Calu3 (cell line): ENCODE measurements at regions of chr6 and their contacts with region 1.

Region 1: GRCh38 chr6:149082286-149082707 is 235.2 kb upstream of the TAB2 start:
- DNase-seq: peak; percentile 71
- H3K4me3 Mint-ChIP-seq: no peak overlapping the region
- H3K27ac Mint-ChIP-seq: no peak overlapping the region
- H3K4me1 Mint-ChIP-seq: no peaks in the 10 kb centered on the region
- H3K27me3 Mint-ChIP-seq: no peaks in the 10 kb centered on the region
- CTCF ChIP-seq: peak; percentile 64

Region 2: GRCh38 chr6:148557796-148558321 is 524.4 kb before region 1 on chr6:
- CTCF ChIA-PET with region 1: no interaction called
- intact Hi-C with region 1: no loop called
- DNase-seq: no peak
- H3K4me3 Mint-ChIP-seq: no peak overlapping the region
- H3K27ac Mint-ChIP-seq: no peak overlapping the region
- H3K4me1 Mint-ChIP-seq: no peaks in the 10 kb centered on the region
- H3K27me3 Mint-ChIP-seq: no peaks in the 10 kb centered on the region
- CTCF ChIP-seq: no peak

Region 3: DNA sequence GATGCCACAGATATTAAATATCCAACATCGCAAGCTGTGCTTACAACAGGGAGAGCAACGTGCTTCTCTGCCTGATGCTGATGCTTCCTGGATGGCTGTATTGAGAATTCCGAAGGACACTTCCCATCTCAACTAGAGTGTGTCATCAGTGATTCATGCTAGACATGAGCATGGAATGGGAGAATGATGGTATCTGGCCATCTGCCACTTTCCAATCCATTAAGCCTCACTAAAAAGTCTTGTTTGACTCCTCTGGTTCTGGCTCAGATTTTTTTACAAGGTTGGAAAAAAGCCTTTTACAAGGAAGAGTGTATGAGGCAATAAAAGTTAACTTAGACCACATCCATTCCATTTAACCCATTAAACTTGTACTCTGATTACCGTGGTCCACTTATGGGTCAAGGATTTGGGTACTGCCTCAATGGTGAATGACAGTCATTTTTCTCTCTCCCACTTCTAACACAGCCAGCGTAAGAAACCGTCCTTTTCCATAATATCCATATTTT is 70.2 kb before region 1 on chr6:
- CTCF ChIA-PET with region 1: no interaction called
- intact Hi-C with region 1: no loop called
- DNase-seq: no peak
- H3K4me3 Mint-ChIP-seq: no peak overlapping the region
- H3K27ac Mint-ChIP-seq: no peak overlapping the region
- H3K4me1 Mint-ChIP-seq: no peaks in the 10 kb centered on the region
- H3K27me3 Mint-ChIP-seq: no peaks in the 10 kb centered on the region
- CTCF ChIP-seq: no peak

Region 4: GRCh38 chr6:149028767-149029405 is 53.4 kb before region 1 on chr6:
- CTCF ChIA-PET with region 1: interaction called, 3 read pairs
- intact Hi-C with region 1: loop called (anchors 2 kb)
- DNase-seq: peak; percentile 61
- H3K4me3 Mint-ChIP-seq: no peak overlapping the region
- H3K27ac Mint-ChIP-seq: no peak overlapping the region
- H3K4me1 Mint-ChIP-seq: peaks cover 22% of the 10 kb centered on the region
- H3K27me3 Mint-ChIP-seq: no peaks in the 10 kb centered on the region
- CTCF ChIP-seq: no peak

Region 5: DNA sequence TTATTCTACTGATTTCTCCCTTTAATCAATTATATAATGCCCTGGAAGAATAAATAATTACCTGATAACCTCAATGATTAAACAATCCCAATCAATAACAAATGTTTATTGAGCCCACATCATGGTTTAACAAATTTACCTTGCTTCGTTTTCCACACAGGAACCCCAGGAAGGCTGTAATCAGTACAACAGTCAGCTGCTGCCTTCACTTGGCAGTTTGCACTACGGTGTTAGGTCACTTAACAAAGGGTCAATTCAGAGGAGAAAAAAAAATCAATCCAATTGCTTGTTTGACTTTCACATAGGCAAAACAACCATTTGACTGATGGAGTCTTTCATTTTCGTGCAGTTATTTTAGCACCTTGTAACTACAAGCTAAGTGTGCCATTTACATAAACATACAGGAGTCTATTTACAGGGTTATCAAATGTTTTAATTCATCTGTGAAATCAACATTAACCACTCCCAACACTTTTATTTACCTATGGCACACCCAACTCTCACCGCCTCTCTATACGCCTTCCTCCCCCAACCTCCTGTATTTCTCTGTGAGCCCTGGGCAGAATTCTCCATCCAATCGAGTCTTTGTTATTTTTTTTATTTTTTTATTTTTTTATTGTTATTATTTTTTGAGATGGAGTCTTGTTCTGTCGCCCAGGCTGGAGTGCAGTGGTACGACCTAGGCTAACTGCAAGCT is 94.8 kb after region 1 on chr6:
- CTCF ChIA-PET with region 1: no interaction called
- intact Hi-C with region 1: loop called (anchors 5 kb)
- DNase-seq: peak; percentile 27
- H3K4me3 Mint-ChIP-seq: peak overlapping the region; percentile 36
- H3K27ac Mint-ChIP-seq: no peak overlapping the region
- H3K4me1 Mint-ChIP-seq: peaks cover 12% of the 10 kb centered on the region
- H3K27me3 Mint-ChIP-seq: no peaks in the 10 kb centered on the region
- CTCF ChIP-seq: no peak

Region 6: GRCh38 chr6:149335924-149336608 is 253.8 kb after region 1 on chr6:
- CTCF ChIA-PET with region 1: no interaction called
- intact Hi-C with region 1: loop called (anchors 10 kb)
- DNase-seq: no peak
- H3K4me3 Mint-ChIP-seq: peak overlapping the region; percentile 14
- H3K27ac Mint-ChIP-seq: peak overlapping the region; percentile 14
- H3K4me1 Mint-ChIP-seq: peaks cover 67% of the 10 kb centered on the region
- H3K27me3 Mint-ChIP-seq: no peaks in the 10 kb centered on the region
- CTCF ChIP-seq: no peak